Left cardiac atrium (tissue), 4 donors: ENCODE measurements at regions of chr3 and their contacts with region 1.

Region 1: GRCh38 chr3:39208463-39209055 is 16.2 kb upstream of the XIRP1 start:
- DNase-seq: no peak
- ATAC-seq: peak; percentile 77 to 81

Region 2: DNA sequence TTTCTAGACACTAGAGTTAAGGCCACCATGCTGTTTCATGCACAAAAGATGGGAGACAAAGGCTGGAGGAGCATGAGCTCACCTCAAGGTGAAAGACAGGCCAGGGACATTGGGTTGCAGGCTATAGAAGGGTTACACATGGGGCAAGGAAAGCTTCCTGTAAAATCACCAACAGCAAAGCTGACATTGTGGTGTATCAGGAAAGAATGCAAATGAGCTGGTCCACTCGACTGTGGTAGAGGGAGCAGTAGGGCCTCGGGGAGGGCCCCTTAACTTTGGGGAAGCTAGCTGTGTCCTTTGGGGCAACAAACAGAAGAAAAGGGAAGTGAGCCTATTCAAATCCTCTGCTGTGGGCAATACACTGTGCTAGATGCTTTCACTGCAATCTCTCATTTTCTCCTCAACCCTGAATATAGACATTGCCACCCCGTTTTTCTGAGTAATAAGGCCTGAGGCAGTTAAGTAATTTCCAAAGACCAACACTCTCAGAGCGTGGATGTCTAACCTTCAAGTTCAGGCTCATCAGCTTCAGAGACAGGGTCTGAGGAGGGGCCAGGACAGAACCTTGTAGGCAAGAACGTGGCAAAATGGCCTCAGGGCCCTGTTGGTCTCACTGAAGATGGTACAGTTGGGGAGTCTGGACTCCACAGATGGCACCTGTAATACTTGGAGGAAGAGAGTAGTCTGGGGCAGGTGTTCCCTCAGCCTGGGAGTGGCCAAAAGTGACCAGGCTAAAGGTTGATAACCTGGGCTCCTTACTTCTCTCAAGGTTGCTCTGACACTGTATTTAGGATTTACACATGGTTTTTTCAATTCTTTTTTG is 47.2 kb after region 1 on chr3:
- intact Hi-C with region 1: loop called in 1 of 2 experiments (anchors 5 kb)
- DNase-seq: no peak
- ATAC-seq: peak; percentile 36 to 69